ENCODE measurements at regions of chr15 and their contacts with region 1.

Region 1: DNA sequence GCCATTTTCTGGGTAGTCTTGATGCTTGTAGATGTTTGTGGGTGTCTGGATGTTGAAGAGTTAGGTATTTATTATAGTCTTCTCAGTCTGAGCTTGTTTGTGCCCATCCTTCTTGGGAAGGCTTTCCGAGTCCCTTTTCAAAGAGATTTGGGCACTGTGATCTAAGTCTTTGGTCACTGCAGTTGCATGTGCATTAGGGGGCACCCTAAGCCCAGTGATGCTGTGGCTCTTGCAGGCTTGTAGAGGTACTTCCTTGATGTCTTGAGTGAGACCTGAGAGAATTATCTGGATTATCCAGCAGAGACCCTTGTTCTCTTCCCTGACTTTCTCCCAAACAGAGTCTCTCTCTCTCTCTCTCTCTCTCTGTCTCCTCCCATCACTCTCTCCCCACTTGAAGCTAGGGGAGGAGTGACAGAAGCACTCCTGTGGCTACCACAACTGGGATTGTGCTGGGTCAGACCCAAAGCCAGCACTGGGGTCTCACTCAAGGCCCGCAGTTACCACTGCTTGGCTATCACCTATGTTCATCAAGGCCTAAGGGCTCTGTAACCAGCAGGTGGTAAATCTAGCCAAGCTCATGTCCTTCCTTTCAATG is 68.5 kb downstream of the TMCO5A start:
- DNase-seq: peak in 1 of 4 experiments; percentile 27
- ATAC-seq: peak; percentile 59; the same call in 2 of the 3 replicates
- H3K4me3 ChIP-seq: no peak overlapping the region
- H3K27ac ChIP-seq: no peak overlapping the region
- H3K4me1 ChIP-seq: no peaks in the 10 kb centered on the region
- H3K27me3 ChIP-seq: no peaks in the 10 kb centered on the region
- CTCF ChIP-seq: peak; percentile 30 to 34 (median 32); a peak in 2 of 6 replicates
- EP300 ChIP-seq: no peak
- POLR2A ChIP-seq: no peak
- RAD21 ChIP-seq: peak; percentile 28 to 73; a peak in 3 of 4 replicates

Region 2: DNA sequence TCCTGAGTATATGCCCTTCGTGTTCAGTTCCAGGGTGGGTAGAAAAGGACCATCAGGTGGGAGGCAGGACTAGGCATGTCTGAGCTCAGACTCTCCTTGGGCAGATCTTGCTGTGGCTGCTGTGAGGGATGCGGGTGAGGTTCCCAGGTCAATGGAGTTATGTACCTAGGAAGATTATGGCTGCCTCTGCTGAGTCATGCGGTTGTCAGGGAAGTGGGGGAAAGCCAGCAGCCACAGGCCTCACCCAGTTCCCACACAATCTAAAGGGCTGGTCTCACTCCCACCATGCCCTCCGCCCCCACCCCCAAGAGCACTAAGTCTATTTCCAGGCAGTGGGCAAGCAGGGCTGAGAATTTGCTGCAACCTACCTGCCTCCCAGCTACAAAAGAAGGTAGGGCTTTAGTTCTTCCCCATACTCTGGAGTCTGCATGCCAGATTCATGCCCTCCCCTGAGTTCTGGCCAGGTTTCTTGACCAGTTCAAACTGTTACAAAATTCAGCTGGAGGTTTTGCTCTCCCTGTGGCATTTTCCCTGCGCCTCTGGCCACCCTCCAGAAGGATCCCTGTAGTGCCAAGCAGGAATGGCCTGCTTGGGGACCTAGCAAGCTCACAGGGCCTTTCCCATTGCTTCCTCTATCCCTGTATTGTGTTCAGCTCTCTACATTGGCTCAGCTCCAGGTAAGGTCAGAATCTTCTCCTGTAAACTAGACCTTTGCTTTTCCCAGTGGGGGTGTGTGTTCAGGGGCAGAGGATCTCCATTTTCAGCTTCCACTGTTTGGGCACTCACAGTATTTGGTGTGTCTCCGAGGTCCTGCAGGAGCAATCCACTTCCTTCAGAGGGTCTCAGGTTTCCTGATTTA is 81.2 kb before region 1 on chr15:
- CTCF ChIA-PET with region 1: no interaction called
- POLR2A ChIA-PET with region 1: no interaction called
- in situ Hi-C with region 1: no loop called
- intact Hi-C with region 1: no loop called
- DNase-seq: peak in 1 of 4 experiments; percentile 7
- ATAC-seq: no peak
- H3K4me3 ChIP-seq: no peak overlapping the region
- H3K27ac ChIP-seq: no peak overlapping the region
- H3K4me1 ChIP-seq: no peaks in the 10 kb centered on the region
- H3K27me3 ChIP-seq: no peaks in the 10 kb centered on the region
- CTCF ChIP-seq: no peak
- EP300 ChIP-seq: no peak
- POLR2A ChIP-seq: no peak
- RAD21 ChIP-seq: no peak

Region 3: GRCh38 chr15:38242055-38242454 is 239.1 kb after region 1 on chr15:
- CTCF ChIA-PET with region 1: no interaction called
- POLR2A ChIA-PET with region 1: no interaction called
- in situ Hi-C with region 1: no loop called
- intact Hi-C with region 1: loop called (anchors 10 kb)
- DNase-seq: no peak
- ATAC-seq: no peak
- H3K4me3 ChIP-seq: no peak overlapping the region
- H3K27ac ChIP-seq: no peak overlapping the region
- H3K4me1 ChIP-seq: no peaks in the 10 kb centered on the region
- H3K27me3 ChIP-seq: peaks cover 3 to 8% of the 10 kb centered on the region in 2 experiments; a peak in 3 of 5 replicates
- CTCF ChIP-seq: no peak
- EP300 ChIP-seq: no peak
- POLR2A ChIP-seq: no peak
- RAD21 ChIP-seq: no peak

Region 4: GRCh38 chr15:38367476-38367875 is 364.5 kb after region 1 on chr15:
- CTCF ChIA-PET with region 1: no interaction called
- POLR2A ChIA-PET with region 1: no interaction called
- in situ Hi-C with region 1: loop called (anchors 10 kb)
- intact Hi-C with region 1: no loop called
- DNase-seq: no peak
- ATAC-seq: no peak
- H3K4me3 ChIP-seq: no peak overlapping the region
- H3K27ac ChIP-seq: no peak overlapping the region
- H3K4me1 ChIP-seq: no peaks in the 10 kb centered on the region; a peak in 1 of 5 replicates
- H3K27me3 ChIP-seq: peaks cover 5 to 14% of the 10 kb centered on the region in 2 experiments; a peak in 3 of 5 replicates
- CTCF ChIP-seq: no peak
- EP300 ChIP-seq: no peak
- POLR2A ChIP-seq: no peak
- RAD21 ChIP-seq: no peak

Measured in K562 (cell line).